Activated CD4-positive, alpha-beta T cell treated with anti-CD3 and anti-CD28 coated beads for 36 hours (primary cell): ENCODE measurements at regions of chr7 and their contacts with region 1.

Region 1: DNA sequence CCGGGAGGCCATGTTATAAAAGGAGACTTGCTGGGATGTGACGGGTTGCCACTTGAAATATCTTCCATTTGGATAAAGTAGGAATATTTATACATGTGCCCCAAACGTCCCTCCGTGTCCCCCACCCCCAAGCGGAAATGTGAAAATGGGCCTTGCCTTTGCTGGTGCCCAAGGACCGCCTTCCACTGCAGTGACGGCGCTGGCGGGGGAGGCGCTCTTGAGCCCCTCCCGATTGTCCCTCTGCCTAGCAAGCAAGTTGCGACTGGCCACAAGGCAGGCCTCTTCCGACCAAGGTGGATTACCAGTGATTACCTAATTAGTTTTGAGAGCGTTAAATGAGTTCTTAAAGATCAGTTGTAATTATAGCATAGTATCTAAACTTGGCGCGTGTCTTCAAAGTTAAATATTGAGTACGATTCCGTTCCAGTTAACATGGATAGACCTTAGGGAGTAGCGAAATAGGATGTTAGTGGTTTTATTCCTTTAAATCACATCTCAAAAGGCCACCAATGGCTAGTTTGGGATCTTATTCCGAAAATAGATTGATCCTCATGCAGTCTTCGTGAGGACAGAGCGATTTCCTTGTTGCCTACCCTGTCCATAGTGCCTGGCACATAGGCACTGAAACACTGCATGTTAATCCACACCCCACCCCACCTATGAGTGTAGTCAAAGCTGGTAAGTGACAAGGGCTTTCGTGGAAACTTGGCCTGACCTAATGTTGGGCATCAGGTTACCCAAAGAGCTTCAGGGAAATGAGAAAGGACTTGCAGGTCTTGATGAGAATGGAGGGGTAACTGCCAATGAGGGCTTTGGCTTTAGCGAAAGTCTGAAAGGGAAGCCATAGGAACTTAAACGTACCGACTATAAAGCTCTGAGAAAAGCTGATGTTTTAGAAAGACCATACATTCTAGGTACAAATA is 1.1 kb downstream of the PPIA start:
- DNase-seq: peak; percentile 91
- ATAC-seq: peak; percentile 58
- H3K4me3 Mint-ChIP-seq: peak overlapping the region; percentile 100
- H3K27ac Mint-ChIP-seq: peak overlapping the region; percentile 99
- H3K4me1 Mint-ChIP-seq: peaks cover 41% of the 10 kb centered on the region
- H3K27me3 Mint-ChIP-seq: no peaks in the 10 kb centered on the region

Region 2: GRCh38 chr7:44573464-44574286 is 223.9 kb before region 1 on chr7 and contains the start of gene DDX56:
- CTCF ChIA-PET with region 1: interaction called, 3 read pairs
- POLR2A ChIA-PET with region 1: interaction called, 3 read pairs
- intact Hi-C with region 1: loop called in 1 of 2 experiments (anchors 2 kb)
- DNase-seq: peak; percentile 97
- ATAC-seq: peak; percentile 98
- H3K4me3 Mint-ChIP-seq: peak within 1 kb of the TSS; percentile 90
- H3K27ac Mint-ChIP-seq: peak within 1 kb of the TSS; percentile 94
- H3K4me1 Mint-ChIP-seq: peaks cover 41% of the 10 kb centered on the region
- H3K27me3 Mint-ChIP-seq: no peaks in the 10 kb centered on the region
- total RNA-seq, gene DDX56: 98.5 to 104 TPM

Region 3: GRCh38 chr7:44615149-44615611 is 182.4 kb before region 1 on chr7:
- CTCF ChIA-PET with region 1: interaction called, 3 read pairs
- POLR2A ChIA-PET with region 1: interaction called, 8 read pairs
- intact Hi-C with region 1: loop called in 1 of 2 experiments (anchors 1 kb)
- DNase-seq: peak; percentile 43
- ATAC-seq: no peak
- H3K4me3 Mint-ChIP-seq: no peak overlapping the region
- H3K27ac Mint-ChIP-seq: peak overlapping the region; percentile 66
- H3K4me1 Mint-ChIP-seq: peaks cover 65% of the 10 kb centered on the region
- H3K27me3 Mint-ChIP-seq: no peaks in the 10 kb centered on the region

Region 4: DNA sequence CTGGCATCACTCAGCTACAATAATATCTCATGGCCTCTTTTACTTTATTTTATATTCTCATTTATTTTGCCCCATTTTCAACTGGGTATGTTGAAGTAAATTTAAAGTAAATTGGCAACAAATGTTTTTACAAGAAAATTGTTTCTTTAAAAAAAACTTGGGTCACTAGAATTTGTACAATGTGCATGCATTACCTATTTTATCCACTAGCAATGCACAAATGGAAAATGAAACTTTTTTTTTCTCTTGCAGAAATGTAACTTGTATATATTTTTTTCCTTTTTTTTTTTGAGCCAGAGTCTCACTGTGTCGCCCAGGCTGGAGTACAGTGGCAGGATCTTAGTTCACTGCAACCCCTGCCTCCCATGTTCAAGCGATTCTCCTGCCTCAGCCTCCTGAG is 60.6 kb after region 1 on chr7:
- CTCF ChIA-PET with region 1: interaction called, 11 read pairs
- POLR2A ChIA-PET with region 1: no interaction called
- intact Hi-C with region 1: no loop called
- DNase-seq: no peak
- ATAC-seq: no peak
- H3K4me3 Mint-ChIP-seq: no peak overlapping the region
- H3K27ac Mint-ChIP-seq: no peak overlapping the region
- H3K4me1 Mint-ChIP-seq: peaks cover 18% of the 10 kb centered on the region
- H3K27me3 Mint-ChIP-seq: no peaks in the 10 kb centered on the region

Region 5: DNA sequence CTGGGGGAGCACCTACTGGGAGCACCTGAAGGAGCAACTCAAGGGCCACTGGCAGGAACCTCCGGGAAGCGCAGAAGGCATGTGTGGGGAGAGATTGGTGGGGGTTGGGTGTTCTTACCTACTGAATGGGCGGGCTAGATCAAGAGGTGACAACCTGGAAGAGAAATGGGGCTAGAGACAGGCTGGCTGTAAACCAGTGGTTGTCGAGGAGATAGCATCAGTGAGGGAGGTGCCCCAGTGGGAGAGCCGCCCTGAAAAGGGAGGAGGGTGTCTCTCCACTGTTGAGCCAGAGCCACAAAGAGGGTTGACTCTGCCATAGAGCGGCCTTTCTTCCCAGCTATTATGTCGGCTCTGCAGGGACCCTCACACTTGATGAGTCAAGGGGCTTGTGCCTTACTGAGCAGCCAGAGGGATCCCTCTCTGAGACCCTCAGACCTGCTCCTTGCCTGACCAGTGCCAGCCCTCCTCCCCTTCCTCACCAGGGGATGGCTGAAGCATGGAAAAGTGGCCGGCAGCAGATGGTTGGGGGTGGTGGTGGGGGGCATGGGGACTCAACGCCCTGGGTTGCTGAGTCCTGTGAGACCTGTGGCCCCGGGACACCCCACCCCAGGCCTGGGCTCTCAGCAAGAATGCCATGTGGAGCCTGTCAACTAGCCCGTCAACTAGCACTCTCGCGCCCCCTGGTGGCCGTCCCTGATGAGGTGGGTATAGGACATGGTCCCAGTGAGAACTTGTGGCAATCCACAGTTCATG is 124.2 kb after region 1 on chr7:
- CTCF ChIA-PET with region 1: interaction called, 3 read pairs
- POLR2A ChIA-PET with region 1: no interaction called
- intact Hi-C with region 1: loop called (anchors 2 to 5 kb)
- DNase-seq: peak; percentile 99
- ATAC-seq: peak; percentile 99
- H3K4me3 Mint-ChIP-seq: no peak overlapping the region
- H3K27ac Mint-ChIP-seq: peak overlapping the region; percentile 47
- H3K4me1 Mint-ChIP-seq: peaks cover 15% of the 10 kb centered on the region
- H3K27me3 Mint-ChIP-seq: peaks cover under 1% of the 10 kb centered on the region

Region 6: GRCh38 chr7:44999245-45000095 is 201.9 kb after region 1 on chr7:
- CTCF ChIA-PET with region 1: interaction called, 4 read pairs
- POLR2A ChIA-PET with region 1: interaction called, 5 read pairs
- intact Hi-C with region 1: loop called in 1 of 2 experiments (anchors 1 kb)
- DNase-seq: peak; percentile 100
- ATAC-seq: peak; percentile 88
- H3K4me3 Mint-ChIP-seq: peak overlapping the region; percentile 91
- H3K27ac Mint-ChIP-seq: peak overlapping the region; percentile 91
- H3K4me1 Mint-ChIP-seq: peaks cover 56% of the 10 kb centered on the region
- H3K27me3 Mint-ChIP-seq: no peaks in the 10 kb centered on the region